Transverse colon (tissue), 4 donors: ENCODE measurements at regions of chr5 and their contacts with region 1.

Region 1: GRCh38 chr5:163564321-163564938 is 59.0 kb downstream of the MAT2B start:
- DNase-seq: peak; percentile 62
- H3K4me3 ChIP-seq: no peak overlapping the region
- H3K27ac ChIP-seq: no peak overlapping the region
- H3K4me1 ChIP-seq: peaks cover 0 to 21% (median 12%) of the 10 kb centered on the region in 4 donors
- H3K27me3 ChIP-seq: peaks cover 53% of the 10 kb centered on the region
- CTCF ChIP-seq: peak; percentile 82 to 92 (median 88)
- EP300 ChIP-seq: no peak
- POLR2A ChIP-seq: no peak

Region 2: GRCh38 chr5:164504141-164504772 is 939.8 kb after region 1 on chr5:
- in situ Hi-C with region 1: loop called (anchors 5 to 25 kb)
- intact Hi-C with region 1: no loop called
- DNase-seq: peak; percentile 15
- H3K4me3 ChIP-seq: no peak overlapping the region
- H3K27ac ChIP-seq: no peak overlapping the region
- H3K4me1 ChIP-seq: no peaks in the 10 kb centered on the region
- H3K27me3 ChIP-seq: no peaks in the 10 kb centered on the region
- CTCF ChIP-seq: peak; percentile 70 to 78 (median 77)
- EP300 ChIP-seq: no peak
- POLR2A ChIP-seq: no peak

Region 3: GRCh38 chr5:165209086-165209727 is 1644.8 kb after region 1 on chr5:
- in situ Hi-C with region 1: loop called in 2 of 4 experiments (anchors 25 kb)
- intact Hi-C with region 1: no loop called
- DNase-seq: no peak
- H3K4me3 ChIP-seq: no peak overlapping the region
- H3K27ac ChIP-seq: no peak overlapping the region
- H3K4me1 ChIP-seq: no peaks in the 10 kb centered on the region
- H3K27me3 ChIP-seq: no peaks in the 10 kb centered on the region
- CTCF ChIP-seq: peak; percentile 36 to 71 (median 59)
- EP300 ChIP-seq: no peak
- POLR2A ChIP-seq: no peak